ENCODE measurements at regions of chr4 and their contacts with region 1.

Region 1: DNA sequence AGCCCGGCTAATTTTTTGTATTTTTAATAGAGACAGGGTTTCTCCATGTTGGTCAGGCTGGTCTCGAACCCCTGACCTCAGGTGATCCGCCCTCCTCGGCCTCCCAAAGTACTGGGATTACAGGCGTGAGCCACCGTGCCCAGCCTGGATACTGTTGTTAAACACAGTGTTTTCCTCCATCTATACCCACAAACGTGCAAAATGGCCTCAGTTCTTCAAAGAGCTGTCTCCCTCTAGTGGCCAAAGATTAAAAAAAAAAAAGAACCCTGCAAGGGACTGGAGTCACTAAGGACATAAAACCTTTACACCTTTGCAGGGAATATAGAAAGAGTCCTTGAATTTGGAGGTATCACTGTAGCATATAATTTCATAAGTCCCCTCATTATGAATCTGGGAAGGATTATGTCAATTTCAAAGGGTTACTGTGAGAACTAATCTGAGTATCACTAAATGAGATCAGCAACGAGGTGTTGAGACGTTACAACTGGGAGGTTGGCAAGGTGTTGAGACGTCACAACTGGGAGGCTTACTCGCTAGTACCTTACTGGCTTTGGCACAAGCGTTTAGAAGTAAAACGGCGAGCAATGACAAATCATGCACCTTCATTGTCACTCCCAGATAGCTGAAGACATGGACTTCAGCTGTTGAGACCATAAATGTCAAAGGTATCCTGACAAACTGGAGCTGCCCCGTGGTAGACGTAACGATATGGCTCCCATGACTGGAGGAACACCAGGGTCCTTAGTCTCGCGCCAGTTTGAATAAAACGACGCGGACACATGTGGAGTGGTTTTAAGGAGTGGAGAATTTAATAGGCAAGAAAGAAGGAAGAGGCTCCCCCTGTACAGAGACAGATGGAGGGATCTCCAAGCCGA is 33.4 kb upstream of the ENPP6 start:
- DNase-seq: no peak
- ATAC-seq: peak; percentile 97
- H3K4me3 ChIP-seq: no peak overlapping the region
- H3K27ac ChIP-seq: no peak overlapping the region
- H3K4me1 ChIP-seq: no peaks in the 10 kb centered on the region
- H3K27me3 ChIP-seq: no peaks in the 10 kb centered on the region
- CTCF ChIP-seq: peak; percentile 38 to 60 (median 54); a peak in 5 of 6 replicates
- EP300 ChIP-seq: no peak
- POLR2A ChIP-seq: no peak
- RAD21 ChIP-seq: peak; percentile 67

Region 2: GRCh38 chr4:183840311-183840710 is 410.7 kb before region 1 on chr4:
- CTCF ChIA-PET with region 1: no interaction called
- POLR2A ChIA-PET with region 1: no interaction called
- RAD21 ChIA-PET with region 1: interaction called, 3 read pairs
- SMC1A ChIA-PET with region 1: no interaction called
- in situ Hi-C with region 1: no loop called
- intact Hi-C with region 1: loop called (anchors 1 kb)
- DNase-seq: peak; percentile 5
- ATAC-seq: peak; percentile 92
- H3K4me3 ChIP-seq: no peak overlapping the region
- H3K27ac ChIP-seq: no peak overlapping the region
- H3K4me1 ChIP-seq: no peaks in the 10 kb centered on the region
- H3K27me3 ChIP-seq: no peaks in the 10 kb centered on the region
- CTCF ChIP-seq: peak; percentile 81 to 89 (median 88)
- EP300 ChIP-seq: no peak
- POLR2A ChIP-seq: no peak
- RAD21 ChIP-seq: peak; percentile 93

Region 3: DNA sequence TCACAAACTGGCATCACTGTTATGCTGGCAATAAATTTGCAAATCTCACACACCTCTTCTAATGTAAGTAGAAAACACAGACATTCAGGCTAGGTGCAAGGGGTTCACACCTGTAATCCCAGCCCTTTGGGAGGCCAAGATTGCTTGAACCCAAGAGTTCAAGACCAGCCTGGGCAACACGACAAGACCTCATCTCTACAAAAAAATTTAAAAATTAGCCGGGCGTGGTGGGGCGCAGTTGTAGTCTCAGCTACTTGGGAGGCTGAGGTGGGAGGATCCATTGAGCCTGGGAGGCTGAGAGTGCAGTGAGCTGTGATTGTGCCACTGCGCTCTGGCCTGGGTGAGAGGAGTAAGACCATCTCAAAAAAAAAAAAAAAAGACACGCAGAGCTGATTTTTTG is 49.8 kb after region 1 on chr4:
- CTCF ChIA-PET with region 1: no interaction called
- POLR2A ChIA-PET with region 1: no interaction called
- RAD21 ChIA-PET with region 1: no interaction called
- SMC1A ChIA-PET with region 1: no interaction called
- in situ Hi-C with region 1: no loop called
- intact Hi-C with region 1: no loop called
- DNase-seq: no peak
- ATAC-seq: no peak
- H3K4me3 ChIP-seq: no peak overlapping the region
- H3K27ac ChIP-seq: no peak overlapping the region
- H3K4me1 ChIP-seq: no peaks in the 10 kb centered on the region
- H3K27me3 ChIP-seq: no peaks in the 10 kb centered on the region
- CTCF ChIP-seq: no peak
- EP300 ChIP-seq: no peak
- POLR2A ChIP-seq: no peak
- RAD21 ChIP-seq: no peak

Measured in GM12878 (cell line).